BJ (cell line): ENCODE measurements at regions of chr10 and their contacts with region 1.

Region 1: DNA sequence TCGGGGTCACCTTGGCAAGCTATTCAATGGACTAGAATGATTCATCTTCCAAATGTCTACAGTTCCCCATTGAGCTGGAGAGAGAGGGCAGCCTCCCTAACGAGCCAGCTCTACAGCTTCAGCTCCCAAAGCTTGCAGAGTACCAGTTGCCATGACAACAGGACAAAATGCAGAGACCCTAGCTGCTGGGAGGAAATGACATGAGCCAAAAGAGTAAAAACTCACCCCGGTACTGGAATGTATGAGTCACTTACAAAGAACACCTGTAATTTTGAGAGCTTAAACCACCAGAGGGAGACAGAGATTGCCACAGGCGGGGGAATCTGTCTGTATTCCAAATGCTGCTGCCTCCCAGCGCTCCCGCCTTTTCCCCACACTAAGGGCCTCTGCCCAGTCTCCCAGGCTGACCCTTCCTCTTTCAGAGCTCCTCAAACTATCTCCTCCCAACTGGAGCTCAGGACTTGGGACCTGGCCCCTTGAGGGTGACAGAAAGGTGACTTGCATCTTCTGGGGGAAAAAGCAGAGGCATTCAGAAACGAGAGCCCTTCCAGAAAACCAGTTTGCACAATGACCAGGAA is 95.5 kb downstream of the CUL2 start:
- DNase-seq: no peak
- H3K4me3 ChIP-seq: no peak overlapping the region
- H3K27me3 ChIP-seq: no peaks in the 10 kb centered on the region
- CTCF ChIP-seq: peak; percentile 72

Region 2: GRCh38 chr10:35027567-35027966 is 32.9 kb after region 1 on chr10:
- CTCF ChIA-PET with region 1: interaction called, 53 read pairs
- POLR2A ChIA-PET with region 1: no interaction called
- DNase-seq: peak; percentile 15
- H3K4me3 ChIP-seq: no peak overlapping the region
- H3K27me3 ChIP-seq: no peaks in the 10 kb centered on the region
- CTCF ChIP-seq: peak; percentile 38; the same call in 1 of the 2 replicates

Region 3: GRCh38 chr10:35218339-35218955 is 223.8 kb after region 1 on chr10:
- CTCF ChIA-PET with region 1: interaction called, 16 read pairs
- POLR2A ChIA-PET with region 1: no interaction called
- DNase-seq: peak; percentile 25
- H3K4me3 ChIP-seq: no peak overlapping the region
- H3K27me3 ChIP-seq: no peaks in the 10 kb centered on the region; the same call in 1 of the 2 replicates
- CTCF ChIP-seq: peak; percentile 74